ENCODE measurements at regions of chr2 and their contacts with region 1.

Region 1: DNA sequence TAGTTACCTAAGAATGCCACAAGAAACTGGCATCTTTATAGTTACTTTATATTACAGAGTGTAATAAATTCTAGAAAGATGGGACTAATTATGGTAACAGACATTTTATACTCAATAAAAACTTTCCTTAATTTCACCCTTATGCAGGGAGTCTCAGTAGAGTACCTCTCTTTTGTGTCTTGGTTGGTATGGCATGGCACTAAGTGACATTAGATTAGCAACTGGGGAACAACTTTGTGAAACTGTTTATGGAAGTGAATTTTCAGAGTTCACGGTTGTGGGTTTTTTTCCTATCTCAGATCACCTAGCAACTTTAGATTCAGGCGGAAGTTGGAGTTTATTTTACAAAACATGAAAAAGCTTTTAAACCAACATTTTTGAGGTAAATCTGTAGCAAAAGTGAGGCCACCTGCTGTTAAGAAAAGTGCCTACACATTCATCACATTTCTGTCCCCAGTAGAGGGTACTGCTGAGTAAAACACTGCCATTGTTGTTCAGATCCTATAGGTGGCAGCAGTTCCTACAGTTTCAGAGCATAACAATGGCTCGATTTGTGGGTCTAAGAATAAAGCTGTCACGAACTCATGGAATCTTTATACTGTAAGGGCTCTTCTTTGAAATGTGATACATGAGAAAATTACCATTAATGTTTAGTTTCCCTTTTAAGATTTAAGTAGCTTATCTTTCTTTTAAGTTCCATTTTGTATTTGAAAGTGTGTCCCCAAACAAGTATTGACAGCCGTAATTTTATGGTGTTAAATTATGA is 117.6 kb downstream of the CAMKMT start:
- DNase-seq: peak; percentile 86
- H3K4me3 ChIP-seq: no peak overlapping the region
- H3K27ac ChIP-seq: no peak overlapping the region
- H3K4me1 ChIP-seq: no peaks in the 10 kb centered on the region
- H3K27me3 ChIP-seq: no peaks in the 10 kb centered on the region
- CTCF ChIP-seq: peak; percentile 100

Region 2: DNA sequence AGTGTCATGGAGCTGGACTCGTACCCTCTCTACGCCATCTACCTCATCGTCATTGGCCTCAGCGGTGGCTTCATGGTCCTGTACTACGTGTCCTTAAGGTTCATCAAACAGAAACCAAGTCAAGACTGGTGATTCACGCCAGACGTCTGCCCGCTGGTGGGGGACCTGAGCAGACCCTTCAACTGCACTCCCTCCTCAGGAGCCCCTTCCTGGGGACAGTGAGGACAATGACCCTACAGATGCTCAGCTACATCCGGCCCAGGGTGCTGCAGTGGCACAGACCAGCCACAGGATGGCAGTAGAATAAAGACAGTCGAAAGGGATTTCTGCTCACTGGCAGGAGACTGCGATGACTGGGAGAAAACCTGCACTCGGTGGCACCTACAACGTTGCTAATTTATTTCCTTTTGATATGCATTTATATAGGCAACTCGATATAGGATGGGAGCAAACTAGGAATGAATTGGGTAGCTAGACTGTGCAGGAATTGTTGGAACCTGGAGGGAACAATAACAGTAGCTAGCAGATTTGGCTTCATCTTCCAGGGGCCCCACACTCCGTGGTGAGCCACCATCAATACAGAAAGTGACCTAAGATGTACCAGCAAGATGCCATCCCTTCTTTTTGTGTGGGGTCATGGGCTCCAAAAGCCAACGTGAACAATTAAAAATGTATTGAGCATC is 601.4 kb before region 1 on chr2:
- CTCF ChIA-PET with region 1: no interaction called
- POLR2A ChIA-PET with region 1: no interaction called
- intact Hi-C with region 1: loop called (anchors 10 kb)
- DNase-seq: peak; percentile 74
- H3K4me3 ChIP-seq: no peak overlapping the region
- H3K27ac ChIP-seq: no peak overlapping the region
- H3K4me1 ChIP-seq: peaks cover 4% of the 10 kb centered on the region
- H3K27me3 ChIP-seq: no peaks in the 10 kb centered on the region
- CTCF ChIP-seq: peak; percentile 98

Region 3: DNA sequence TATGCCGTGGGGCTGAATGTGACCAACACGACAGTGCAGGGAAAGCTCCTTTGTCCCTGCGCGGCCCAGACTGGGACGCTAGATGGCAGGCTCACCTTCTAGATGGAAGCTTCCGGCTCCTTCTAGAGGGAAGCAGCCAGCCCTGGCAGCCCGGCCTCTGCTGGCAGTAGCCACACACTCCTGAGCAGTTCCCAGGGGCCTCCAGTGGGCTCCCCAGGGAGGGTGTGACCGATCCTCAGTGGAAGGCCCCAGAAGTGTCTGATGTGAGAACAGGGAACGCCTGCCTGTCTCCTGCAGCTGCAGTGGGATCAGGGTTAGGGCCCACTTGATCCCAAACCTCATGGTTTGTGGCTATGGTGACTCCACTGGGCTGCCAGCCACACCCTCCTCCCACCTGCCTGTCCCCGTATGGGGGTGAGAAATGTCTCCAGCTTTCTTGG is 435.0 kb before region 1 on chr2:
- CTCF ChIA-PET with region 1: interaction called, 9 read pairs
- POLR2A ChIA-PET with region 1: no interaction called
- intact Hi-C with region 1: loop called (anchors 1 kb)
- DNase-seq: peak; percentile 93
- H3K4me3 ChIP-seq: no peak overlapping the region
- H3K27ac ChIP-seq: no peak overlapping the region
- H3K4me1 ChIP-seq: no peaks in the 10 kb centered on the region
- H3K27me3 ChIP-seq: no peaks in the 10 kb centered on the region
- CTCF ChIP-seq: peak; percentile 90

Region 4: DNA sequence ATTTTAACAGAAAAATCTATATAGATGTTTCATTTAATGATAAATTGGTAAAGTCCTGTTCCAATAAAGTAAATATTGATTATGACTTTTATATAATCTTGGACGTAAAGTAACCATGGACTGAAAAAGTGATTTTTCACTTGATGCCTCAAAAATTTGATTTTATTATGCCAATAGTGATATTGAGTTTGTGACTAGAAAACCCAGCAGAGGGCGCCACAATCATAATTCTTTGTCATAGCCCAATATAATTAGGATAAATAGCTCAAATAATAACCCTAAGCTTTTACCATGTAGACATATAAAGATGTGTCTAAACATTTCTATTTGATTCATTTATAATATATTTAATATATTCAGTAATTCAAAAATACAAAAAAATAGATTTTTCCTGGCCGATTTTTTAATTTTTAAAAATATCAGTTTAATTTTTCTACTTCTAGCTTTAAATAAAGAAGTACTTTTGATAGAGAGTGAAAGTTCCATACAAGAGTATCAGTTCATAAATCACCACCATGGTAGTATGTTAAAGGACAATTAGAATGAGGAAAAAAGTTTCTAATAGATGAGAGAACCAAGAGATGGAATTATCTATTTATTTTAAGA is 86.9 kb before region 1 on chr2:
- CTCF ChIA-PET with region 1: interaction called, 10 read pairs
- POLR2A ChIA-PET with region 1: no interaction called
- intact Hi-C with region 1: no loop called
- DNase-seq: peak; percentile 63
- H3K4me3 ChIP-seq: no peak overlapping the region
- H3K27ac ChIP-seq: no peak overlapping the region
- H3K4me1 ChIP-seq: no peaks in the 10 kb centered on the region
- H3K27me3 ChIP-seq: no peaks in the 10 kb centered on the region
- CTCF ChIP-seq: peak; percentile 77

Region 5: GRCh38 chr2:44713170-44713569 is 233.9 kb after region 1 on chr2:
- CTCF ChIA-PET with region 1: interaction called, 4 read pairs
- POLR2A ChIA-PET with region 1: no interaction called
- intact Hi-C with region 1: loop called (anchors 5 kb)
- DNase-seq: no peak
- H3K4me3 ChIP-seq: no peak overlapping the region
- H3K27ac ChIP-seq: no peak overlapping the region
- H3K4me1 ChIP-seq: no peaks in the 10 kb centered on the region
- H3K27me3 ChIP-seq: no peaks in the 10 kb centered on the region
- CTCF ChIP-seq: no peak

Region 6: DNA sequence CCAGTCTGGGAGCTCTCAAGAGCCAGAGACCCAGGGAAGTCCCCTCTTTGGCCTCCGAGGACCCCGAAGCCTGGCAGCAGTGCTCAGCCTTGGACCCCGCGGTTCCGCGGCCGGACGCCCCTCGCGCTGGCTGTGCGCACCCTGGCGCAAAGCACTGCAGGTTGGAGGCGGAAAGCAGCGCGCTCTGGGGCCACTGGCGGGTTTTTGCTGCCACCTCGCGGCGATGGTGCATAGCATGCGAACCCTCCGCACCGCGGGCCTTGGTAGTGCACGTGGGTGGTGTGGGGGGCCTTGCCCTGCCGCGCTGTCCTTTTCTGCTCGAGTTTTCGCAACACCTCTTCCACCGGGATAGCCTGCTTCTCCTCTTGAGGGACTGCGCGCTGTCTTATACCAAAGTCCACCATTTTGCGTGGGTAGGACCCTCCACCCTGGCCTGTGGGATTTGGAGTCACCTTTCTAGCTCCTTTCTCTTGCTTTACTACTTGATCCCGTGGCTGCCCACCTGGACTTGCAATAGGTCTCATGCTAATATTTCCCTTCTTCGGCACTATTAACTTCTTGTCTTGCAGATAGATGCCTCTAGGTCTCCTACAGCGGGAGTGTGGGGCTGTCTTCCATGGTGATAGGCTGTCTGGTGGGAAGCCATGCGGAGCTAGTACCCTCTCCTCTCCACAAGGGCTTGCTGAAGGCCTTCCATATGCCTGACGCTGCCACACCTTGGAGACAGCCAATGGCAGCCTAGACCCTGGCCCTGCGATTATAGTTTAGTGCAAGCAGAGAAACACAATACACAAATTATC is 476.5 kb after region 1 on chr2:
- CTCF ChIA-PET with region 1: interaction called, 29 read pairs
- POLR2A ChIA-PET with region 1: no interaction called
- intact Hi-C with region 1: loop called (anchors 1 kb)
- DNase-seq: peak; percentile 83
- H3K4me3 ChIP-seq: peak overlapping the region; percentile 33
- H3K27ac ChIP-seq: no peak overlapping the region
- H3K4me1 ChIP-seq: no peaks in the 10 kb centered on the region
- H3K27me3 ChIP-seq: peaks cover 37% of the 10 kb centered on the region
- CTCF ChIP-seq: peak; percentile 88